Sigmoid colon (tissue), 7 donors: ENCODE measurements at regions of chr19 and their contacts with region 1.

Region 1: GRCh38 chr19:57709611-57710010 is 607 bp upstream of the ZNF154 start:
- DNase-seq: no peak
- H3K4me3 ChIP-seq: peak overlapping the region in 3 of 4 donors; percentile 62 to 69 (median 63)
- H3K27ac ChIP-seq: peak overlapping the region; percentile 83 to 91 (median 88)
- H3K4me1 ChIP-seq: peaks cover 0 to 35% (median 22%) of the 10 kb centered on the region in 4 donors
- H3K27me3 ChIP-seq: no peaks in the 10 kb centered on the region
- CTCF ChIP-seq: no peak
- EP300 ChIP-seq: no peak
- POLR2A ChIP-seq: no peak

Region 2: DNA sequence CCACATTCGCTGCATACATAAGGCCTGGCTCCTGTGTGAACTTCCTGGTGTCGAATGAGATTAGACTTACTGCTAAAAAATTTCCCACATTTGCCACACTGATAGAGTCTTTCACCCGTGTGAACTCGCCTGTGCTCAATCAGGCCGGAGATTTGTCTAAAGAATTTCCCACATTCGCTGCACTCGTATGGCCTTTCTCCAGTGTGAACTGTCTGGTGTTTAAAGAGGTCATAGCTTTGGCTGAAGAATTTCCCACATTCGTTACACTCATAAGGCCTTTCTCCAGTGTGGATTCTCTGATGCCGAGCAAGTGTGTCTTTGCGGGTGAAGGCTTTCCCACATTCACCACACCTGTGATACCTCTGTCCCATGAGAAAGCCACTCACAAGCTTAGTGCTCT is 11.3 kb after region 1 on chr19:
- intact Hi-C with region 1: loop called (anchors 1 kb)
- DNase-seq: no peak
- H3K4me3 ChIP-seq: no peak overlapping the region
- H3K27ac ChIP-seq: no peak overlapping the region
- H3K4me1 ChIP-seq: no peaks in the 10 kb centered on the region
- H3K27me3 ChIP-seq: no peaks in the 10 kb centered on the region
- CTCF ChIP-seq: no peak
- EP300 ChIP-seq: no peak
- POLR2A ChIP-seq: no peak